ENCODE measurements at regions of chrX and their contacts with region 1.

Region 1: GRCh38 chrX:56764153-56764974 is 35.3 kb downstream of the NBDY start:
- DNase-seq: peak; percentile 43 to 50
- ATAC-seq: peak; percentile 83 to 93
- H3K4me3 ChIP-seq: peak overlapping the region; percentile 49 to 84 (median 66)
- H3K27ac ChIP-seq: peak overlapping the region; percentile 80 to 91 (median 88)
- H3K4me1 ChIP-seq: peaks cover 10 to 18% of the 10 kb centered on the region in 2 donors
- H3K27me3 ChIP-seq: no peaks in the 10 kb centered on the region
- CTCF ChIP-seq: peak; percentile 18 to 81 (median 78)
- POLR2A ChIP-seq: no peak

Region 2: GRCh38 chrX:55160685-55161552 is 1603.4 kb before region 1 on chrX:
- in situ Hi-C with region 1: loop called in 1 of 4 experiments (anchors 25 kb)
- intact Hi-C with region 1: no loop called
- DNase-seq: peak; percentile 81 to 87
- ATAC-seq: peak; percentile 96
- H3K4me3 ChIP-seq: peak overlapping the region; percentile 64 to 73 (median 68)
- H3K27ac ChIP-seq: peak overlapping the region; percentile 90 to 91 (median 91)
- H3K4me1 ChIP-seq: peaks cover 0 to 5% of the 10 kb centered on the region in 2 donors
- H3K27me3 ChIP-seq: no peaks in the 10 kb centered on the region
- CTCF ChIP-seq: peak; percentile 12 to 52 (median 41)
- POLR2A ChIP-seq: peak; percentile 76 to 83

Region 3: GRCh38 chrX:56802921-56803849 is 38.8 kb after region 1 on chrX:
- in situ Hi-C with region 1: no loop called
- intact Hi-C with region 1: no loop called
- DNase-seq: peak; percentile 38 to 61
- ATAC-seq: peak; percentile 78 to 84
- H3K4me3 ChIP-seq: peak overlapping the region; percentile 52 to 76 (median 63)
- H3K27ac ChIP-seq: peak overlapping the region; percentile 81 to 85 (median 84)
- H3K4me1 ChIP-seq: peaks cover 5 to 24% of the 10 kb centered on the region in 2 donors
- H3K27me3 ChIP-seq: no peaks in the 10 kb centered on the region
- CTCF ChIP-seq: peak; percentile 42 to 77 (median 67)
- POLR2A ChIP-seq: no peak

Region 4: GRCh38 chrX:57453901-57454300 is 689.5 kb after region 1 on chrX:
- in situ Hi-C with region 1: no loop called
- intact Hi-C with region 1: loop called (anchors 10 kb)
- DNase-seq: no peak
- ATAC-seq: no peak
- H3K4me3 ChIP-seq: no peak overlapping the region
- H3K27ac ChIP-seq: no peak overlapping the region
- H3K4me1 ChIP-seq: no peaks in the 10 kb centered on the region
- H3K27me3 ChIP-seq: peaks cover 0 to 4% (median 0%) of the 10 kb centered on the region in 3 donors
- CTCF ChIP-seq: peak in 3 of 5 experiments; percentile 18 to 36 (median 33)
- POLR2A ChIP-seq: no peak